ENCODE measurements at regions of chr1 and their contacts with region 1.

Region 1: GRCh38 chr1:30707412-30708360 is 15.7 kb downstream of the MATN1 start:
- DNase-seq: peak; percentile 84
- ATAC-seq: peak; percentile 91
- H3K4me3 Mint-ChIP-seq: no peak overlapping the region
- H3K27ac Mint-ChIP-seq: no peak overlapping the region
- H3K4me1 Mint-ChIP-seq: no peaks in the 10 kb centered on the region
- H3K27me3 Mint-ChIP-seq: peaks cover 2% of the 10 kb centered on the region

Region 2: DNA sequence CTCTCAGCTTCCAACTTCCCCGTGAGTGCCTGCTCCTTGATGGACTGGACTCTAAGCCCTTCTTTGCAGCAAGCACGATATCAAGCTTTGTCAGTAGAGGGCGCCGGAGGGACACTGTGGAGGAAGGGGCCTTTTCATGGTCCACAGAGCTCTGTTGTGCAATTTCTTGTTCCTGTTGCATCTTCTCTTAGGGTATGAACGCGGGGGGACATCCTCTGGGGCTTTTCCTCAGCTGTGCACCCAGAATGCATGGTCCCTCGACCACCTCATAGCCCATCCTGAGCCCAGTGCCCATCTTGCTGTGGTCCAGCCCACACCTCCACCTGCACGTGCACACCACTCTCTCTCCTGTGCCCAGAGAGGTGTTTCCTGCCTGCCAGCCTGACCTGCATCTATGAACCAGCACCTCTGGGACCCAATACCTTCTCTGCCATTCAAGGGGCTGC is 914.6 kb before region 1 on chr1:
- CTCF ChIA-PET with region 1: interaction called, 3 read pairs
- POLR2A ChIA-PET with region 1: no interaction called
- intact Hi-C with region 1: loop called (anchors 1 to 5 kb)
- DNase-seq: peak; percentile 88
- ATAC-seq: peak; percentile 39
- H3K4me3 Mint-ChIP-seq: no peak overlapping the region
- H3K27ac Mint-ChIP-seq: no peak overlapping the region
- H3K4me1 Mint-ChIP-seq: no peaks in the 10 kb centered on the region
- H3K27me3 Mint-ChIP-seq: peaks cover 5% of the 10 kb centered on the region

Region 3: GRCh38 chr1:29798699-29799566 is 908.8 kb before region 1 on chr1:
- CTCF ChIA-PET with region 1: no interaction called
- POLR2A ChIA-PET with region 1: no interaction called
- intact Hi-C with region 1: loop called in 1 of 2 experiments (anchors 5 kb)
- DNase-seq: no peak
- ATAC-seq: no peak
- H3K4me3 Mint-ChIP-seq: no peak overlapping the region
- H3K27ac Mint-ChIP-seq: no peak overlapping the region
- H3K4me1 Mint-ChIP-seq: no peaks in the 10 kb centered on the region
- H3K27me3 Mint-ChIP-seq: peaks cover 3% of the 10 kb centered on the region

Region 4: DNA sequence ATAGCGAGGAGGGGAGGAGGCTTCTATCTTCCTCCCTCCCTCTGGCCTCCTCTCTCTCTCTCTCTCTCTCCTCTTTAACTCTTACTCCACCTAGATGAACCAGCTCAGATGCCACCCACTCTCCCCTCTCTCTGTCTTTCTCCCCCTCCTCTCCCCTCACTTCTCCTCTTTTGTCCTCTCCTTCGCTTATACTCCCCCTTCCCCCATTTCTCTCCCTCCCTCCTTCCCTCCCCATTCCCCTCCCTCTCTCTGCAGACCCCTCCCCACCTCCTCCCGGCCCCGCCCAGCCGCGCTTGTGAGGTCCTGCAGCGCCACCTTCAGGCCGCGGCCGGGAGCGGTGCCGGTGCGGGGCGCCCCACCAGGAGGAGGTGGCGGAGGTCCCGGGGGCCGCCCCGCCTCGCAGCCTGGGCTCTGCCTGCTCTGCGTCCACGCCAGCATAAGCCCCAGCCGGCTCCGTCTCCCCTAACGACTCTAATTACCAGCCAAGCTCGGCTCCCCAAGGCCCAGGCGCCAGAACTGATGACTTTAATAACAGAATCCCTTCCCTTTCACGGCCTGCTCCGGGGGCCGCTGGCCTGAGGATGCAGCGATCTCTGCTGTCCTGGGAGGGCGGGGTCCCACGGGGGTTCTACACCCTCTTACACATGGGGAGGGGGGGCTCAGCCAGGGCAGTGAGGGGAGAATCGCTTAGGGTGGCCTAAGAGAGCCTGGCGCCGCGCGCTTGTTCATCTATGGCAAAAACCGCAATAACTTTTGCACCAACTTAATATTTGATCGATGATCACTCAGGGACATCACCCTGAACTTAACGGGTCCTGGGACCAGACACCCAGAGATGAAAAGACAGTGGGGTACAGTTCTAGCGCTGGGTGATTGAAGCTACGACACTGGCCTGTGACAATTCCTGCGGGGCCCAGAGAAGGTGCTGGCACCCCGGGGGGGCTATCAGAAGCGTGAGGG is 621.6 kb before region 1 on chr1:
- CTCF ChIA-PET with region 1: no interaction called
- POLR2A ChIA-PET with region 1: no interaction called
- intact Hi-C with region 1: loop called in 1 of 2 experiments (anchors 2 kb)
- DNase-seq: peak; percentile 75
- ATAC-seq: peak; percentile 64
- H3K4me3 Mint-ChIP-seq: no peak overlapping the region
- H3K27ac Mint-ChIP-seq: no peak overlapping the region
- H3K4me1 Mint-ChIP-seq: no peaks in the 10 kb centered on the region
- H3K27me3 Mint-ChIP-seq: peaks cover 35% of the 10 kb centered on the region

Region 5: DNA sequence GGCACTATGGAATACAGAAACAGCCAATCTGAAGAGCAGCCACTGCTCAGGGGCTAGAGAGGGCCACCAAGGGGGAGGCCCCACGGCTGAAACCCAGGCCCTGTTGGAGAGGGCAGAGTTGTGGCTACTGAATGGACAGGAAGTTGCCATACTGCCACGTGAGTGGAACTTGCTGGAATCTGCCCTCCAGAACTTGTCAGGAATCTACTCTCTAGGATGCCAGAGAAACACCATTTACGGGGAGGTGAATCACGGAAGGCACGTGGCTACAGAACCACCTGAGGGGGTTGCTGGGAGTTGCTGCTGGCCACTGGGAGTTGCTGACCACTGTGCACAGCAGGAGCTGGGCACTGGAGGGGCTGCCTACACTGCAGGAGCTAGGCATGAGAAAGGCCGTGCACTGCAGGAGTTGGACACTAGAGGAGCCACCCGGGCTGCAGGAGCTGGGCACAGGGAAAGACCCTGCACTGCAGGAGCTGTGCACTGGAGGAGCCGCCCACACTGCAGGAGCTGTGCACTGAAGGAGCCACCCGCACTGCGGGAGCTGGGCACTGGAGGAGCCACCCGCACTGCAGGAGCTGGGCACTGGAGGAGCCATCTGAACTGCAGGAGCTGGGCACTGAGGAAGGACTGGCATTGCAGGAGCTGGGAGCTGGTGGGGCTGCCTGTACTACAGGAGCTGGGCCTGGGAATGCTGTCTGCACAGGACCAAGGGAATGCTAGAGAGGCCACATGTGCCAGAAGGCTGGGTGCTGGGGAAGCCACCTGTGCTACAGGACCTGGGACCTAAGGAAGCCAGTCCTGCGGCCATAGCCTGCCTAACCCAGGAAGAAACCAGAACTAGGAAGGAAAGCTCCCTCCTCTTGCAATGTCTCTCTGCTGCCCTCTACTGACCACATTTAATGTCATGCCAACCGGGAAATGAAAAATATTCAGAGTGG is 327.7 kb before region 1 on chr1:
- CTCF ChIA-PET with region 1: interaction called, 5 read pairs
- POLR2A ChIA-PET with region 1: no interaction called
- intact Hi-C with region 1: loop called (anchors 1 to 2 kb)
- DNase-seq: peak; percentile 59
- ATAC-seq: peak; percentile 53
- H3K4me3 Mint-ChIP-seq: no peak overlapping the region
- H3K27ac Mint-ChIP-seq: no peak overlapping the region
- H3K4me1 Mint-ChIP-seq: peaks cover 2% of the 10 kb centered on the region
- H3K27me3 Mint-ChIP-seq: peaks cover 6% of the 10 kb centered on the region

Region 6: DNA sequence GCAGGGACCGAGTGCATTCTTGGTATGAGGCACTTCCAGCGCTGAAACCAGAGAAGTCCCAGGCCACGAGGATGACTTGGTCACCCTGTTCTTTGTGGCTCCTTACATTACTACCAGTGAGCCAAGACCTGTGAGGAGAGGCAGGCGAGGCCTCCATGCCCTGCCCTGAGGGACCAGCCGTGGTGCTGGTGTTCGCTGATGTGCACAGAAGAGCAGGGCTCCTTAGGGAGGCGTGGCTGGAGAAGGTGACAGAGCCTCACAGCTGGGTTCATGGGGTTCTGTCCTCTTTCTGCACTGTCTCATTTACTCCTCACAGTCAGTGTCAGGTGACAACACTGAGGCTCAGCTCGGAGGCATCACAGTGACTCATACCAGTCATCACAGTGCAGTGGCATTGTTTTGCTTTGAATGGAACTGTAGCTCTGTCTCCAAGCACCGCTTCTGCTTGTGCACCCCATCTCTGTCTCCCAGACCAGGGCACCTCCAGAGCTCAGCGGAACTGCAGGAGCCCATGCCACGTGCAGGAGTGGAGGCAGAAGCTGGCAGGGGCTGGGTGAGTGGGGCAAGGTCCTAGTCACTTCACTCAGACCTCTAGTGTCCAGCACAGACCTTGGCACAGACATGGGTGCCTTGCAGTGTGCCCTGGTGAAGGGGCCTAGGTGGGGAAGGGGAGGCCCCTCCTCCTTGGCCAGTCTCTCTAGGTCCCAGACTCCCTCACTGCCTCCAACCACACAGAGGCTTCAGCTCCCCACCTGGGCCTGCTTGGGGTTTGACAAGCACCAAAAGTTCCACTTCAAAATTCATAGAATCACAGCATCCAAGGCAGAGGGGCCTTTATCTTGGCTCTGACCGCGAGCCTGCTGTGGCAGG is 295.2 kb before region 1 on chr1:
- CTCF ChIA-PET with region 1: no interaction called
- POLR2A ChIA-PET with region 1: no interaction called
- intact Hi-C with region 1: loop called in 1 of 2 experiments (anchors 5 kb)
- DNase-seq: peak; percentile 25
- ATAC-seq: peak; percentile 82
- H3K4me3 Mint-ChIP-seq: no peak overlapping the region
- H3K27ac Mint-ChIP-seq: no peak overlapping the region
- H3K4me1 Mint-ChIP-seq: no peaks in the 10 kb centered on the region
- H3K27me3 Mint-ChIP-seq: peaks cover 12% of the 10 kb centered on the region

Measured in activated CD4-positive, alpha-beta T cell treated with anti-CD3 and anti-CD28 coated beads for 36 hours (primary cell).